Prostate gland (tissue), 2 donors: ENCODE measurements at regions of chr11 and their contacts with region 1.

Region 1: GRCh38 chr11:36041988-36042611 is 98.2 kb downstream of the LDLRAD3 start:
- DNase-seq: no peak
- H3K4me3 ChIP-seq: no peak overlapping the region
- H3K27ac ChIP-seq: no peak overlapping the region
- H3K4me1 ChIP-seq: peaks cover 3% of the 10 kb centered on the region
- H3K27me3 ChIP-seq: no peaks in the 10 kb centered on the region
- CTCF ChIP-seq: peak in 3 of 4 experiments; percentile 9 to 37 (median 28)
- POLR2A ChIP-seq: no peak

Region 2: DNA sequence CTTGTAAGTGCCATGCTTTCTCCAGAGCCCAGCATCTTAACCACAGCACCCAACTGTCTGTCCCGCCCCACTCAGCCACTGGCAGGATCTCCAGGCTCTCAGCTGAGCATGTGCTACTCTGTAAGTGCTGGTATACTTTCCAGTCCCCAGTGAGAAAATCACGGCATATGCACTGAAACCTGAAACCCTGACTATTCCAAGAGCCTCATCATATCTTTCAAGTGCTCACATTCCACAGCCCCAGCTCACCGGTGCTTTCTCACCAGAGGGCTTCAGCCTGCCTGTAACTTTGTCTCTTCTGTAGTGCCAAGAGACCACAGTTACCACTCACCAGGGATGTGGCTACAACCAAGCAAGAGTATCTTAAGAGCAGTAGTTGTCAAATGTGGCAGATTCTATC is 492.3 kb before region 1 on chr11:
- intact Hi-C with region 1: loop called (anchors 10 kb)
- DNase-seq: no peak
- H3K4me3 ChIP-seq: no peak overlapping the region
- H3K27ac ChIP-seq: no peak overlapping the region
- H3K4me1 ChIP-seq: no peaks in the 10 kb centered on the region
- H3K27me3 ChIP-seq: no peaks in the 10 kb centered on the region
- CTCF ChIP-seq: no peak
- POLR2A ChIP-seq: no peak